ENCODE measurements at regions of chr2 and their contacts with region 1.

Region 1: GRCh38 chr2:62768615-62769014 is 63.1 kb downstream of the EHBP1 start:
- DNase-seq: no peak
- H3K4me3 ChIP-seq: no peak overlapping the region
- H3K27ac ChIP-seq: no peak overlapping the region
- H3K4me1 ChIP-seq: no peaks in the 10 kb centered on the region
- H3K27me3 ChIP-seq: no peaks in the 10 kb centered on the region
- CTCF ChIP-seq: no peak

Region 2: GRCh38 chr2:62831729-62832128 is 63.1 kb after region 1 on chr2:
- CTCF ChIA-PET with region 1: interaction called, 17 read pairs
- POLR2A ChIA-PET with region 1: no interaction called
- intact Hi-C with region 1: no loop called
- DNase-seq: no peak
- H3K4me3 ChIP-seq: no peak overlapping the region
- H3K27ac ChIP-seq: no peak overlapping the region
- H3K4me1 ChIP-seq: no peaks in the 10 kb centered on the region
- H3K27me3 ChIP-seq: no peaks in the 10 kb centered on the region
- CTCF ChIP-seq: no peak